ENCODE measurements at regions of chr9 and their contacts with region 1.

Region 1: GRCh38 chr9:15231788-15232635 is 75.0 kb downstream of the TTC39B start:
- DNase-seq: peak; percentile 39
- H3K4me3 Mint-ChIP-seq: no peak overlapping the region
- H3K27ac Mint-ChIP-seq: no peak overlapping the region
- H3K4me1 Mint-ChIP-seq: peaks cover 49% of the 10 kb centered on the region
- H3K27me3 Mint-ChIP-seq: no peaks in the 10 kb centered on the region

Region 2: DNA sequence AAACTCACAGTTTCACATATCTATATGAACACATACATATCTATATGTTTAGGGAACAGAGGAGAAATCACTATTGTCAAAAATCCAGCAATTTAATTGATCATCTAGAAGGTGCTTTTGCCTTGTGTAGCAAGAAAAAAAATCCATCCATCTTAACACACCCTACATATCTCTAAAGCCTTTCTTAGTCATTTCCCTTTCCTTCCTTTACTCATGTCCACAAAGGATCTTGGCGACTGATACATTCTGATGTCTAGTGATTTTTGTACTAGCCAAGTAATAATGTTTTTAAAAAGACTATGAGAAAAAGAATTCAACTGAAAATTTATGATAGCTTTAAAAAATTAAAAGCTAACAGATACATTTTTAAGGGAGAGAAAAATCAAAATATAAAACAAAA is 561.3 kb before region 1 on chr9:
- CTCF ChIA-PET with region 1: no interaction called
- POLR2A ChIA-PET with region 1: no interaction called
- intact Hi-C with region 1: loop called (anchors 2 kb)
- DNase-seq: no peak
- H3K4me3 Mint-ChIP-seq: no peak overlapping the region
- H3K27ac Mint-ChIP-seq: peak overlapping the region; percentile 69
- H3K4me1 Mint-ChIP-seq: peaks cover 13% of the 10 kb centered on the region
- H3K27me3 Mint-ChIP-seq: no peaks in the 10 kb centered on the region

Region 3: DNA sequence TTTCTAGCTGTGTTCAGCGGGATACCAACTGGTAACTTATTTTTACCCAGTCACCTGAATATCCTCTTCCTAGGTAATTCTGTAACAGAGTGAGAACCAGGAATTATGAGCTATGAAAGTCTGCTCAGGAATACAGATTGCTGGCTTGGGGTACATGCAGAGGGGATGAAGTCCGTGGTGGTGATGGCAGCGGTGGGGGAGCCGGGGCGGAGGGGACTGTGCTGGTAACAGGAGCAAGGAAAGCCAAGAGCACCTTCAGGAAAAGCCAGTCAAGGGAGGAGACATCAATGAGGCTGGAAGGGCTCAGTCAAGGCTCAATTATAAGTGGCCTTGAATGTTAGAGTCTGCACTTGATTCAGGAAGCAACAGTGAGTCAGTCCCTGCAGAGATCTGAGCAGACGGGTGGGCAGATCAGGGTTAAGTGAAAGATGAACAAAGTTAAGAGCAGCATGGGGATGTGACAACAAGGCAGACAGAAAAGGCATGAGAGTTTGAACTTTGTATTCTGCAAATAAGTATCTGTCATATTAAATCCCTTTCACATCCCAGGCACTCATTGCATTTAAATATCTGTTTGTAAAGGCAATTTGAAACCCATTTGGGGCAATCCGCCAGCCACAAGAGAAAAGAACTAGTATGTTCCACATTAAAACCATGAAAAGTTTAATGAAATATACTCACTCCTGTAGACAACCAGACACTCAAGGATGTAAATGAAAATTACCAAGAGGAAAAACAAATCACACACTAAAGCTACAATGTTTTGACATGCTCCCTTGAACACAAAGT is 26.2 kb before region 1 on chr9:
- CTCF ChIA-PET with region 1: interaction called, 135 read pairs
- POLR2A ChIA-PET with region 1: no interaction called
- intact Hi-C with region 1: loop called (anchors 1 kb)
- DNase-seq: no peak
- H3K4me3 Mint-ChIP-seq: no peak overlapping the region
- H3K27ac Mint-ChIP-seq: no peak overlapping the region
- H3K4me1 Mint-ChIP-seq: peaks cover 13% of the 10 kb centered on the region
- H3K27me3 Mint-ChIP-seq: no peaks in the 10 kb centered on the region

Region 4: GRCh38 chr9:15211160-15211814 is 20.7 kb before region 1 on chr9:
- CTCF ChIA-PET with region 1: interaction called, 135 read pairs
- POLR2A ChIA-PET with region 1: no interaction called
- intact Hi-C with region 1: loop called (anchors 1 kb)
- DNase-seq: peak; percentile 58
- H3K4me3 Mint-ChIP-seq: no peak overlapping the region
- H3K27ac Mint-ChIP-seq: no peak overlapping the region
- H3K4me1 Mint-ChIP-seq: peaks cover 8% of the 10 kb centered on the region
- H3K27me3 Mint-ChIP-seq: no peaks in the 10 kb centered on the region

Region 5: DNA sequence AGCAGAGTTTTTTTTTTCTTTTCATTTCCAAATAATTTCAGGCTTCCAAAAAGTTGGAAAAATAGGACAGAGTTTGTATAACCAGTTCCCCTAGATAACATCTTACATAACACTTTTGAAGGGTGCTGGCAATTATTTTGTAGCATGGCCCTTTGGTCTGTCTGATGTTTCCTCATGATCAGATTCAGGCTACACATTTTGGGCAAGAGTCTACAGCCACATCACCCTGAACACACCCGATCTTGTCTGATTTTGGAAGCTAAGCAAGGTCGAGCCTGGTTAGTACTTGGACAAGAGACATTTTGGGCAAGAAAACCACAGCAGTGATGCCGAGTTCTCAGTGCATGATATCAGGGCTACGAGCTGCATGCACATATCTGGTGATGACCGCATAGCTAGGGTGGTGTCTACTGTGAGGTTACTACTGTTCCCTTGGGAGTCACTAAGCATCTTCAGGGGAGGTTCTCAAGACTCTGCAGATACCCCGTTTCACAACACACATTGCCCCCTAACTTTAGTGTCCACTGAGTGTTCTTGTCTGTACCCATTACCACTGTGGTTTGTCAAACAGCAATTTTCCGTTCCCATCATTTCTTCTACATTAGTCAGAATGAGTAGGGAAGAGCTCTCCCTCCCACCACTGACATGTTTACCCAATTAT is 11.2 kb before region 1 on chr9:
- CTCF ChIA-PET with region 1: interaction called, 135 read pairs
- POLR2A ChIA-PET with region 1: no interaction called
- intact Hi-C with region 1: no loop called
- DNase-seq: no peak
- H3K4me3 Mint-ChIP-seq: no peak overlapping the region
- H3K27ac Mint-ChIP-seq: no peak overlapping the region
- H3K4me1 Mint-ChIP-seq: peaks cover 28% of the 10 kb centered on the region
- H3K27me3 Mint-ChIP-seq: no peaks in the 10 kb centered on the region

Region 6: GRCh38 chr9:15295761-15296405 is 63.9 kb after region 1 on chr9:
- CTCF ChIA-PET with region 1: interaction called, 6 read pairs
- POLR2A ChIA-PET with region 1: no interaction called
- intact Hi-C with region 1: loop called (anchors 1 kb)
- DNase-seq: peak; percentile 37
- H3K4me3 Mint-ChIP-seq: peak overlapping the region; percentile 69
- H3K27ac Mint-ChIP-seq: peak overlapping the region; percentile 97
- H3K4me1 Mint-ChIP-seq: peaks cover 84% of the 10 kb centered on the region
- H3K27me3 Mint-ChIP-seq: no peaks in the 10 kb centered on the region

Measured in activated CD4-positive, alpha-beta memory T cell treated with anti-CD3 and anti-CD28 coated beads for 36 hours (primary cell).